ENCODE measurements at regions of chrX and their contacts with region 1.

Region 1: DNA sequence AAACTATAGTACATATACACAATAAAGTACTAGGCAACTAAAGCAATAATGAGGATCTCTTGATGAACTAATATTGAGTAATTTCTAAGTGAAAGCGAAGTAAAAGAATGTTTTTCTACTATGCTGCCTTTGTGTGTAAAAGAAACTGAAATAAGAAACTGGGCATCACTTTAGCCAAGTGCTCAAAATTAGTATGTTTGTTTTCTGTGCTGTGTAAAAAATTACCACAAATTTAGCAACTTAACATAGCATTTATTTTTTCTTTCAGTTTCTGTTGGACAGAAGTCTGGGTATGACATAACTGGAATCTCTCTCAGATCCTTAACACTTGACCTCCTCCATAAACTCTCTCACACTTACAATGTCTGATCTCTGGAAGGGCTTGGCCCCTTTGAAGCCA is 687.1 kb upstream of the MAGEB2 start:
- DNase-seq: no peak
- H3K4me3 ChIP-seq: no peak overlapping the region
- CTCF ChIP-seq: no peak
- POLR2A ChIP-seq: no peak

Region 2: DNA sequence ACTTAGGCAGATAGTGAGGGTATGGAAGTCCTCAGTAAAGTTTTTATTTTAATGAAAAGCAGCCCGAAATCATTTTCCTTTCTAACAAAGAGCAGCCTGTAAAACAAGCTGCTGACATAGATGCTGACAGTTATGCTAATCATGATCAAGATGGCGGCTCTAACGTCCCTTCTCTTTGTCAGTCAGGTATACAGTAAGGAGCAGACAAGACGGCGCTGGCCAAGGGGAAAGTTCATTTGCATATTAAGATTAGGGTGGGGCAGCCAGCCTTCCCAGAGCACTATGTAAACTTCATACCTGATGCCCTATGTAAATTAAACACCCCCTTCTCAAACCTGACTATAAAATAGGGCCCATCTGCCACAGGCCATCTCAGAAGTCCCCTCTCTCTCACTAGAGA is 1643.6 kb before region 1 on chrX:
- intact Hi-C with region 1: loop called (anchors 5 kb)
- DNase-seq: no peak
- H3K4me3 ChIP-seq: no peak overlapping the region
- CTCF ChIP-seq: no peak
- POLR2A ChIP-seq: no peak

Region 3: DNA sequence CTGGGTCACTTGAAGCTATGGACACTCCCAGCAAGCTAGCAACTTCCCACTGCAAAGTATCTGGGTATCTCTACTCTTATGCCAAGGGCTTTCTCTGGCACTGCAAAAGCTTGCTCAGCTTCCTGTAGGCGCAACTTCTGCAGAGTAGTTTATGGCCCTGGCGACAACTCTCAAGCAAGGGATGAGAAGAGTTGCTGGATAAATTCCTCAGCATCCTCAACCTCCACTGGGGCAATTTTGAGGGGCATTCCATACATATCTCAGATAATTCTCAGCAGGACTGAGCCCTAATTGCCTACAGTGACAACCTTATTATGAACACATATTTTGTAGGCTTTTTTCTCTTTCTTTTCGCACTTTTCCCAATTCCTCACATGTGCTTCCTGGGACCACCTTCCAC is 1392.0 kb after region 1 on chrX:
- intact Hi-C with region 1: no loop called
- DNase-seq: no peak
- H3K4me3 ChIP-seq: no peak overlapping the region
- CTCF ChIP-seq: no peak
- POLR2A ChIP-seq: no peak

Region 4: DNA sequence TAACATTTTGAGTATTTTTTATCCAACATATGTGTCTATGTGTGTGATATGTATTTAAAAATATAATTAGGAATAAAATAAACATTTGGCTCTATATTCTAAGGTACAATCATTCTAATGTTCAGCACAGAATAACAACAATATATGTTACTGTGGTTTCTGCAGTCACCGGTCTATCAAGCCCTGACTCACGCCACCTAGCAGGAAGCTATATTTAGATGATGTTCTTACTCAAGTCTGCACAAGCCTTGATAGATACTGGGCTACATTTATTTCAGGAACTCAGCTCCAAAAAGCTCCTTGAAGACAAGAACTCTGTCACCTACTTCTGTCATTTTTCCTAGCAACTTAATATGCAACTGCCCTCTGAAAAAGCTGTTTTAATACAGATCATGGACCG is 1695.5 kb after region 1 on chrX:
- intact Hi-C with region 1: no loop called
- DNase-seq: no peak
- H3K4me3 ChIP-seq: no peak overlapping the region
- CTCF ChIP-seq: no peak
- POLR2A ChIP-seq: no peak

Measured in lower leg skin (tissue), 4 donors.